ENCODE measurements at regions of chr15 and their contacts with region 1.

Region 1: GRCh38 chr15:75809986-75810750 is 33.1 kb upstream of the UBE2Q2 start:
- DNase-seq: peak; percentile 28
- H3K4me3 Mint-ChIP-seq: no peak overlapping the region
- H3K27ac Mint-ChIP-seq: no peak overlapping the region
- H3K4me1 Mint-ChIP-seq: no peaks in the 10 kb centered on the region
- H3K27me3 Mint-ChIP-seq: no peaks in the 10 kb centered on the region

Region 2: DNA sequence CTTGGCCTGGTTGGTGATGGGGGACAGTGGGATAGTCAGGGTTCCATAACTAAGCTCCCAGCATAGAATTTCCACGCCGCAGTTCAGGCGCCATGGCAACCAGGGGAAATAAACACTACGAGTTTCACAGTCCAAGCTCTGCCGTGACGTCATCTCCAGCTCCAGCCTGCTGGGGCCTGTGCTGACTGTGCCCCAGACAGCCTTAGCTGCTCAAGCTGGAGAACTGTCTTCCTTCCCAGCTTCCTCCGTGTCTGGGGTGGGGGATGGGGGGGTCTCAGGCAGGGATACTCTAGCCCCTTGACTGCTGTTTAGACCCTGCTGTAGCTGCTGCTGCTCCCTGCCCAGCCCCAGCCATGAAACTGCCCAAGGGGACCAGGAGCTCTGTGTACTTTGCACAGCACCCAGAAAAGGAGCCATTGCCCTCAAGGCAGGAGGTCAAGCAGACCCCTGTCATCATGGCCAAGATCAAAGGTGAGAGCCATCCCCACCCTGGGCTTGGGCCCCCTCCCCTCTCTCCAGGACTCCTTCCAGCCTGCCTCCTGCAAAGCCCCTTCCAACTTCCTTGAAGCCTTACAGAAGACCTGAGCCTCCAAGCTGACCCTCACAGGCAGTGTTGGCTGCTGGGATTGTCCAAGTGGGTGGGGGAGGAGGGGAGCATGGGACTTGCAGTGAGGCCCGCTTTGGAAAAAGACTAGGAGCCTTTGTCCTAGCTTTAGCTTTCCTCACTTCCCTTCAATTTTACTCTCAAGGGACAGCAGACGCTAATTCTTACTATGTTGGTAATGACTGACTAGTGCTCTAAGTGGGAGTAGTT is 86.1 kb before region 1 on chr15:
- CTCF ChIA-PET with region 1: interaction called, 10 read pairs
- POLR2A ChIA-PET with region 1: no interaction called
- intact Hi-C with region 1: no loop called
- DNase-seq: peak; percentile 73
- H3K4me3 Mint-ChIP-seq: no peak overlapping the region
- H3K27ac Mint-ChIP-seq: no peak overlapping the region
- H3K4me1 Mint-ChIP-seq: peaks cover 8% of the 10 kb centered on the region
- H3K27me3 Mint-ChIP-seq: peaks cover 9% of the 10 kb centered on the region

Region 3: GRCh38 chr15:75887178-75887577 is 77.0 kb after region 1 on chr15:
- CTCF ChIA-PET with region 1: no interaction called
- POLR2A ChIA-PET with region 1: no interaction called
- intact Hi-C with region 1: no loop called
- DNase-seq: no peak
- H3K4me3 Mint-ChIP-seq: no peak overlapping the region
- H3K27ac Mint-ChIP-seq: no peak overlapping the region
- H3K4me1 Mint-ChIP-seq: peaks cover 16% of the 10 kb centered on the region
- H3K27me3 Mint-ChIP-seq: no peaks in the 10 kb centered on the region

Region 4: DNA sequence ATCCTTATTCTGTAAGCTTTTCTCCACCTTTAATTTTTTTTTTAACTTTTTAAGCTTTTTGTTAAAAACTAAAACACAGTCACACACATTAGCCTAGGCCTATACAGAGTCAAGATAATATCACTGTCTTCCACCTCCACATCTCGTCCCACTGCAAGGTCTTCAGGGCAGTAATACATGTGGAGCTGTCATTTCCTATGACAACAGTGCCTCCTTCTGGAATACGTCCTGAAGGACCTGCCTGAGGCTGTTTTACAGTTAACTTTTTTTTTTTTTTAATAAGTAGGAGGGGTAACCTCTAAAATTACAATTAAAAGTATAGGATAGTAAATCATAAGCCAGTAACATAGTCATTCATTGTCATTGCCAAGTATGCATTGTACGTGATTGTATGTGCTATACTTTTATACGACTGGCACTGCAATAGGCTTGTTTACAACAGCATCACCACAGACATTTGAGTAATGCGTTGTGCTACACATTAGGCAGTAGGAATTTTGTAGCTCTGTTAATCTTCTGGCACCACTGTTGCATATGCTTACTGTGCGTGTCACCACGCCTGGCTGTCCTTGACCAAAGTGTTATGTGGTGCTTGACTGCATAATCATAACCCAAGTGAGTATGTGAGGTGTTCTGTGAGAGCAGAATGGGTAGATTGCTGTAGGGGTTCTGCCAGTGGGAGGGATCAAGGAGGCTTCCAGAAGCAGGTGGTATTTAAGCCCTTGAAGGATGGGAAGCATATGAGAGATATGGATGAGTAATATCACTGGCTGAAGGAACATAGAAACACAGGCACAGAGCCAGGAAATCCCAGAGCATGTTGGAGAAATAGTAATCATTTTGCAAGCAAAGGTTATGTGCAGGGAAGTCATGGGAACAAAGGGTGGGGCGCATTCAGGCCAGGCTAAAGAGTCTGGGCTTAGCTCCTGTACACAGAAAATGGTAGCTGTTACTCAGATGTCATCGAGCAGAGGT is 111.8 kb after region 1 on chr15:
- CTCF ChIA-PET with region 1: interaction called, 10 read pairs
- POLR2A ChIA-PET with region 1: no interaction called
- intact Hi-C with region 1: no loop called
- DNase-seq: no peak
- H3K4me3 Mint-ChIP-seq: no peak overlapping the region
- H3K27ac Mint-ChIP-seq: no peak overlapping the region
- H3K4me1 Mint-ChIP-seq: peaks cover 24% of the 10 kb centered on the region
- H3K27me3 Mint-ChIP-seq: no peaks in the 10 kb centered on the region

Region 5: DNA sequence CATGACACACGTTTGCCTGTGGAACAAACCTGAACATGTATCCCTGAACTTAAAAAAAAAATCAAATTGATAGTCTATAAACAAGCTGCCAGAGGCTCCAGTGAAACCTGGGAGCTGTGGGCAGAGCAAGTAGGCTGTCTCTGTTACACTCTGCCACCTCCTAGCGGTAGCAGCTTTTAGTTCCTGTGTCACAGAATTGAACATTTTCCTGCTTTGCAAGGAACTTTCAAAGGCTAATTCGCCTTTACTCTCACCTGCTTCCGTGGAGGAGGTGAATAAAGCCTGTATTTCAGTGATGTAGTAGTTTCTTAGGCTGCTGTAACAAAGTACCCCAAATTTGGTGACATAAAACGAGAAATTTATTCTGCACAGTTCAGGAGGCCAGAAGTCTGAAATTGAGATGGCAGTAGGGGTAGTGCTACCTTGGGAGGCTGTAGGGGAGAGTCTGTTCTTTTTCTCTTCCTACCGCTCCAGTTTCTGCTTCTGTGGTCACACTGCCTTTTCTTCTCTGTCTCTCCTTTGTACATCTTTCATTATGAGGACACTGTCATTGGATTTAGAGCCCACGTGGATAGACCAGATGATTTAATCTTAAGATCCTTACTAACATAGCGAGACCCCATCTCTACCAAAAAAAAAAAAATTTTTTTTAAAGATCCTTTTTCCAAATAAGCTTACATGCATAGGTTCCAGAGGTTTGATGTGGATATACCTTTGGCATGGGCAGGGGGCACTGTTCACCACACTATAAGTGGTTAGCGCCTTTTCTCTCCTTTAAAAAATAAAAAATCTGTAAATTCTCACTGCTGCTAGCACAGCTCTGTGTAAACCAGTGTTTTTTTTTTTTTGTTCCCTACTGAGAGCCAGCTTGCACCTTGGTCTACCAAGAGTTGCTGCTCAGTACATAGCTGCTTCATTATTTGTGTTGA is 118.8 kb after region 1 on chr15:
- CTCF ChIA-PET with region 1: interaction called, 10 read pairs
- POLR2A ChIA-PET with region 1: no interaction called
- intact Hi-C with region 1: no loop called
- DNase-seq: peak; percentile 11
- H3K4me3 Mint-ChIP-seq: no peak overlapping the region
- H3K27ac Mint-ChIP-seq: no peak overlapping the region
- H3K4me1 Mint-ChIP-seq: peaks cover 19% of the 10 kb centered on the region
- H3K27me3 Mint-ChIP-seq: no peaks in the 10 kb centered on the region

Region 6: GRCh38 chr15:76057332-76058000 is 247.3 kb after region 1 on chr15:
- CTCF ChIA-PET with region 1: interaction called, 5 read pairs
- POLR2A ChIA-PET with region 1: no interaction called
- intact Hi-C with region 1: loop called (anchors 10 kb)
- DNase-seq: peak; percentile 45
- H3K4me3 Mint-ChIP-seq: no peak overlapping the region
- H3K27ac Mint-ChIP-seq: no peak overlapping the region
- H3K4me1 Mint-ChIP-seq: peaks cover 19% of the 10 kb centered on the region
- H3K27me3 Mint-ChIP-seq: peaks cover 44% of the 10 kb centered on the region